ENCODE measurements at regions of chr10 and their contacts with region 1.

Region 1: GRCh38 chr10:110944792-110945396 is 25.5 kb downstream of the SHOC2 start:
- DNase-seq: no peak
- ATAC-seq: no peak
- H3K4me3 ChIP-seq: no peak overlapping the region
- H3K4me3 Mint-ChIP-seq: no peak overlapping the region
- H3K27ac ChIP-seq: no peak overlapping the region
- H3K27ac Mint-ChIP-seq: no peak overlapping the region
- H3K4me1 ChIP-seq: no peaks in the 10 kb centered on the region
- H3K4me1 Mint-ChIP-seq: peaks cover 59% of the 10 kb centered on the region
- H3K27me3 ChIP-seq: no peaks in the 10 kb centered on the region
- H3K27me3 Mint-ChIP-seq: no peaks in the 10 kb centered on the region
- CTCF ChIP-seq: no peak

Region 2: GRCh38 chr10:110820321-110820814 is 124.5 kb before region 1 on chr10:
- CTCF ChIA-PET with region 1: no interaction called
- POLR2A ChIA-PET with region 1: no interaction called
- intact Hi-C with region 1: no loop called
- DNase-seq: no peak
- ATAC-seq: no peak
- H3K4me3 ChIP-seq: no peak overlapping the region
- H3K4me3 Mint-ChIP-seq: no peak overlapping the region
- H3K27ac ChIP-seq: no peak overlapping the region
- H3K27ac Mint-ChIP-seq: no peak overlapping the region
- H3K4me1 ChIP-seq: peaks cover 16% of the 10 kb centered on the region
- H3K4me1 Mint-ChIP-seq: peaks cover 29% of the 10 kb centered on the region
- H3K27me3 ChIP-seq: no peaks in the 10 kb centered on the region
- H3K27me3 Mint-ChIP-seq: no peaks in the 10 kb centered on the region
- CTCF ChIP-seq: no peak

Region 3: GRCh38 chr10:110864662-110865140 is 80.2 kb before region 1 on chr10:
- CTCF ChIA-PET with region 1: no interaction called
- POLR2A ChIA-PET with region 1: no interaction called
- intact Hi-C with region 1: no loop called
- DNase-seq: peak in 7 of 9 experiments; percentile 45 to 96 (median 62)
- ATAC-seq: peak; percentile 63
- H3K4me3 ChIP-seq: peak overlapping the region; percentile 5 to 18
- H3K4me3 Mint-ChIP-seq: peak overlapping the region; percentile 78
- H3K27ac ChIP-seq: peak overlapping the region; percentile 77 to 97
- H3K27ac Mint-ChIP-seq: peak overlapping the region; percentile 98
- H3K4me1 ChIP-seq: peaks cover 99% of the 10 kb centered on the region
- H3K4me1 Mint-ChIP-seq: peaks cover 98% of the 10 kb centered on the region
- H3K27me3 ChIP-seq: no peaks in the 10 kb centered on the region
- H3K27me3 Mint-ChIP-seq: no peaks in the 10 kb centered on the region
- CTCF ChIP-seq: no peak

Region 4: DNA sequence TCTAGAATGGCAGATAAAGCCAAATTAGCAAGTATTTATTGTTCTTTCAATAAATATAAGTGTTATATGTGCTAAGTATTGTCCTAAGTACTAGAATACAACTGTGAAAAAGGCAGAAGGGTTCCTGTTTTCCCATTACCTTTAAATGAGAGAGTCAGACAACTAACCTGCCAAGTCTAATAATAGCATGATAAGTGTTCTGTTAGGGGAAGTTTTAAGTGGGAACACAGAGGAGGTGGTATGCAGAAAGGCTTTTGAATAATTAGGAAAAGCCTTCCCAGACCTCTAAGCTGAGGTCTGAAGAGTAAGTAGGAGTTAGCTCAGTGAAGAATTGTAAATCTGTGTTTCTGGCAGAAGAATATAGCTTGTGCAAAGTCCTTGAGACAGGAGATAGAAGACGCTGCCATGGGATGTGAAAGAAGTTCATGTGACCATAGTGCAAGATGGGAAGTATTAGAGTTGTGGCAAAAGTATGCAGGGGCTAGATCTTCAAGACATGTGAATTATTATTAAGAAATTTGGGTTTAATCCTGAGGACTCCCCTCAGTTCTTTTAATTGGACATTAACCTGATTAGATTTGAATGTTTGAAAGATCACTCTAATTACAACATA is 13.0 kb before region 1 on chr10:
- CTCF ChIA-PET with region 1: no interaction called
- POLR2A ChIA-PET with region 1: no interaction called
- intact Hi-C with region 1: loop called in 1 of 2 experiments (anchors 2 kb)
- DNase-seq: no peak
- ATAC-seq: no peak
- H3K4me3 ChIP-seq: no peak overlapping the region
- H3K4me3 Mint-ChIP-seq: no peak overlapping the region
- H3K27ac ChIP-seq: no peak overlapping the region
- H3K27ac Mint-ChIP-seq: no peak overlapping the region
- H3K4me1 ChIP-seq: peaks cover 28% of the 10 kb centered on the region
- H3K4me1 Mint-ChIP-seq: peaks cover 36% of the 10 kb centered on the region
- H3K27me3 ChIP-seq: no peaks in the 10 kb centered on the region
- H3K27me3 Mint-ChIP-seq: no peaks in the 10 kb centered on the region
- CTCF ChIP-seq: no peak

Region 5: GRCh38 chr10:111030042-111030750 is 85.3 kb after region 1 on chr10:
- CTCF ChIA-PET with region 1: no interaction called
- POLR2A ChIA-PET with region 1: no interaction called
- intact Hi-C with region 1: no loop called
- DNase-seq: no peak
- ATAC-seq: no peak
- H3K4me3 ChIP-seq: no peak overlapping the region
- H3K4me3 Mint-ChIP-seq: no peak overlapping the region
- H3K27ac ChIP-seq: no peak overlapping the region
- H3K27ac Mint-ChIP-seq: no peak overlapping the region
- H3K4me1 ChIP-seq: no peaks in the 10 kb centered on the region
- H3K4me1 Mint-ChIP-seq: peaks cover 2% of the 10 kb centered on the region
- H3K27me3 ChIP-seq: no peaks in the 10 kb centered on the region
- H3K27me3 Mint-ChIP-seq: no peaks in the 10 kb centered on the region
- CTCF ChIP-seq: no peak

Region 6: GRCh38 chr10:111076191-111076681 is 131.3 kb after region 1 on chr10:
- CTCF ChIA-PET with region 1: no interaction called
- POLR2A ChIA-PET with region 1: interaction called, 3 read pairs
- intact Hi-C with region 1: loop called in 1 of 2 experiments (anchors 10 kb)
- DNase-seq: peak in 7 of 9 experiments; percentile 11 to 56 (median 45)
- ATAC-seq: peak; percentile 72
- H3K4me3 ChIP-seq: peak overlapping the region; percentile 35 to 57
- H3K4me3 Mint-ChIP-seq: peak overlapping the region; percentile 76
- H3K27ac ChIP-seq: no peak overlapping the region
- H3K27ac Mint-ChIP-seq: no peak overlapping the region
- H3K4me1 ChIP-seq: peaks cover 9% of the 10 kb centered on the region
- H3K4me1 Mint-ChIP-seq: peaks cover 17% of the 10 kb centered on the region
- H3K27me3 ChIP-seq: peaks cover 6 to 10% of the 10 kb centered on the region in 2 experiments
- H3K27me3 Mint-ChIP-seq: peaks cover 64% of the 10 kb centered on the region
- CTCF ChIP-seq: peak; percentile 33

Measured in CD8-positive, alpha-beta T cell (primary cell).